ENCODE measurements at regions of chr5 and their contacts with region 1.

Region 1: GRCh38 chr5:92687821-92688722 is 892.9 kb downstream of the NR2F1-AS1 start:
- DNase-seq: peak; percentile 78
- ATAC-seq: peak; percentile 96
- H3K4me3 ChIP-seq: peak overlapping the region; percentile 1; the same call in 1 of the 2 replicates
- H3K27ac ChIP-seq: no peak overlapping the region; the same call in 1 of the 2 replicates
- H3K4me1 ChIP-seq: no peaks in the 10 kb centered on the region
- H3K27me3 ChIP-seq: no peaks in the 10 kb centered on the region
- CTCF ChIP-seq: peak; percentile 62
- POLR2A ChIP-seq: no peak
- RAD21 ChIP-seq: peak; percentile 72

Region 2: GRCh38 chr5:92838253-92838652 is 150.2 kb after region 1 on chr5:
- CTCF ChIA-PET with region 1: interaction called, 4 read pairs
- POLR2A ChIA-PET with region 1: no interaction called
- dilution Hi-C with region 1: no loop called
- in situ Hi-C with region 1: no loop called
- intact Hi-C with region 1: loop called (anchors 5 kb)
- DNase-seq: no peak
- ATAC-seq: no peak
- H3K4me3 ChIP-seq: no peak overlapping the region
- H3K27ac ChIP-seq: peak overlapping the region; percentile 75; the same call in 1 of the 2 replicates
- H3K4me1 ChIP-seq: peaks cover 9% of the 10 kb centered on the region
- H3K27me3 ChIP-seq: no peaks in the 10 kb centered on the region
- CTCF ChIP-seq: 0 out of 2 replicates have a peak, but pooled peaks have one; percentile 4
- POLR2A ChIP-seq: no peak
- RAD21 ChIP-seq: no peak

Region 3: DNA sequence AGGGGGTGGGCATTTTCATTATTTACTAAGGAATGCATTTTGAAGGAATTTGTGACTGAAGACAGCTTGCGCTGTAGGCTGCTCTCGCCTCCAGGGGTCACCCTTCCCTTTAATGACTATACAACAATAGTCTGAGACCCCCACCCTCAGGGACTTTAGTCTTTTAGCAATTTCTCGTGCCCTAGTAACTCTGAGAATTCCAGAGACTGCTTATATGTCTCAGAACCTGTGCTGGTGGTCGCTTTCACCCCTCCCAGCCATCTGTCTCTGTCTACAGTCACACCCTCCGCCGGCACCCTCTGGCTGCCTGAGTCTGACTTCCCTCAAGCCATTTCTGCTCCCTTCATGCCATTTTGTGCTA is 221.5 kb after region 1 on chr5:
- CTCF ChIA-PET with region 1: interaction called, 6 read pairs
- POLR2A ChIA-PET with region 1: no interaction called
- dilution Hi-C with region 1: no loop called
- in situ Hi-C with region 1: no loop called
- intact Hi-C with region 1: loop called (anchors 1 kb)
- DNase-seq: peak; percentile 11
- ATAC-seq: no peak
- H3K4me3 ChIP-seq: no peak overlapping the region
- H3K27ac ChIP-seq: no peak overlapping the region
- H3K4me1 ChIP-seq: peaks cover 3% of the 10 kb centered on the region
- H3K27me3 ChIP-seq: no peaks in the 10 kb centered on the region
- CTCF ChIP-seq: peak; percentile 43
- POLR2A ChIP-seq: no peak
- RAD21 ChIP-seq: peak; percentile 49

Region 4: DNA sequence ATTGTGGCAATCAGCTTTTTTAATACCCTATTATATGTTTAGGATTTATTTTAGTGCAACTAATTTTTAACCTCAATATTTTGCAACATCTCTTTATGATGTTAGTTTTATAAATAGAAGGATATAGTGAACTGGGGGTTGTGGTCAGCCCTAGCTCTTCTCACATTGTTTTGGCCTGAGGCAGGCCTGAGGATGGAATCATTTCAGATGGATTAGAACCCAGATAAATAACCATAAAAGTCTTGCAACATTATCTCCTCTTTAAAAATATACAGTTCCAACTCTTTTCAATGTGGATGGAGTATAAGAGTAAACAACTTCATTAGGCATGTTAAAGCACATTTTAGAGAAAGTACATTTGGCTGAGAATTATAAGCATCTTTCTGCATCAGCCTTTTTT is 370.2 kb after region 1 on chr5:
- CTCF ChIA-PET with region 1: no interaction called
- POLR2A ChIA-PET with region 1: no interaction called
- dilution Hi-C with region 1: no loop called
- in situ Hi-C with region 1: no loop called
- intact Hi-C with region 1: loop called (anchors 10 kb)
- DNase-seq: peak; percentile 92
- ATAC-seq: peak; percentile 89
- H3K4me3 ChIP-seq: no peak overlapping the region
- H3K27ac ChIP-seq: no peak overlapping the region
- H3K4me1 ChIP-seq: peaks cover 7% of the 10 kb centered on the region
- H3K27me3 ChIP-seq: no peaks in the 10 kb centered on the region
- CTCF ChIP-seq: no peak
- POLR2A ChIP-seq: no peak
- RAD21 ChIP-seq: no peak

Region 5: DNA sequence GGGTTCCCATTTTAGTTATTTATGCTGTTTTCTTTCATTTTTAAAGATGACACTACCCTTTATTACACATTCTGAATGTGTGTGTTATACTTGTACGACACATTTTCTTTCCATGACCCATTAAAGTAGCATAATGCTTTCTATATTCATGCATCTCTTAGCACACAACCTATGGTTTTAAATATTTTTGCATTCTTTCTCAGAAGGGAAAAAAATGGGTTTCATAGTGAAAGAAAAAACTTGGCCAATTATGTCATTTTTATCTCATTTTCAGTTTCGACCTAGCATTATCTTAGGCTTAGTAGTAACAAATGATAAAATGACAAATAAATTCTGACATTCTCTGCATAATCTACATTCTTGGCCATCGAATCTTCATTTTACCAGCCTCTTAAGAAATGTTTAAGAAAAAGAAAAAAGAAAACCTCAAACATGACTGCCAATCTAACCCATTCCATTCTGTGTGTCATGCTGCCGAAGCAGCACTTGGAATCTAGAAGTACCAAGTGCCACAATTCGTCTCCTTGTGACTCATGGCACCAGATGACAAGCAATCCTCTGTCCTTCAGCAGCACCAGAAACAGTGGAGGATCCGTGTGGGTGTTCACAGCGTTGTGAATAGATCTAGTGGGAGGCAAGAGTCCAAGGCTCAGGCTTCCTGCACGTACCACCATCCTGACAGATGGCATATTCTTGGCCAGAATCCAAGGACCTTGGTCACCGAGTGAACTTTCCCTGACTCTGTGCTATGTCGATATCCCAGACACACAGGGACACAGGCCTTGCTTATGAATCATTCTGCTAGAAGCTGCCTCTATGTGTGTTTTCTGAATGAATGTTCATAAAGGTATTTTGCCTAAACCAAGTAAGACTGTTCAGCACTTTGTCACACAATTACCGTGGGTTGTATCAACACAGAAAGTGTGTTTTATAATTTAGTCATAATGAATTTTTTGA is 390.3 kb after region 1 on chr5:
- CTCF ChIA-PET with region 1: no interaction called
- POLR2A ChIA-PET with region 1: no interaction called
- dilution Hi-C with region 1: no loop called
- in situ Hi-C with region 1: no loop called
- intact Hi-C with region 1: loop called (anchors 5 kb)
- DNase-seq: peak; percentile 93
- ATAC-seq: peak; percentile 82
- H3K4me3 ChIP-seq: peak overlapping the region; percentile 29
- H3K27ac ChIP-seq: peak overlapping the region; percentile 97
- H3K4me1 ChIP-seq: peaks cover 4% of the 10 kb centered on the region
- H3K27me3 ChIP-seq: no peaks in the 10 kb centered on the region
- CTCF ChIP-seq: no peak
- POLR2A ChIP-seq: no peak
- RAD21 ChIP-seq: no peak; the same call in 1 of the 2 replicates

Region 6: GRCh38 chr5:93092349-93093105 is 404.5 kb after region 1 on chr5:
- CTCF ChIA-PET with region 1: no interaction called
- POLR2A ChIA-PET with region 1: no interaction called
- dilution Hi-C with region 1: no loop called
- in situ Hi-C with region 1: no loop called
- intact Hi-C with region 1: no loop called
- DNase-seq: peak; percentile 47
- ATAC-seq: peak; percentile 57
- H3K4me3 ChIP-seq: no peak overlapping the region
- H3K27ac ChIP-seq: no peak overlapping the region
- H3K4me1 ChIP-seq: peaks cover 2% of the 10 kb centered on the region; the same call in 1 of the 2 replicates
- H3K27me3 ChIP-seq: no peaks in the 10 kb centered on the region
- CTCF ChIP-seq: peak; percentile 52
- POLR2A ChIP-seq: no peak
- RAD21 ChIP-seq: peak; percentile 60

Region 7: GRCh38 chr5:93246090-93246855 is 558.2 kb after region 1 on chr5:
- CTCF ChIA-PET with region 1: interaction called, 3 read pairs
- POLR2A ChIA-PET with region 1: no interaction called
- dilution Hi-C with region 1: no loop called
- in situ Hi-C with region 1: no loop called
- intact Hi-C with region 1: loop called (anchors 10 kb)
- DNase-seq: peak; percentile 47
- ATAC-seq: peak; percentile 59
- H3K4me3 ChIP-seq: no peak overlapping the region
- H3K27ac ChIP-seq: peak overlapping the region; percentile 41; the same call in 1 of the 2 replicates
- H3K4me1 ChIP-seq: peaks cover 6% of the 10 kb centered on the region
- H3K27me3 ChIP-seq: no peaks in the 10 kb centered on the region
- CTCF ChIP-seq: no peak
- POLR2A ChIP-seq: no peak
- RAD21 ChIP-seq: no peak

Region 8: DNA sequence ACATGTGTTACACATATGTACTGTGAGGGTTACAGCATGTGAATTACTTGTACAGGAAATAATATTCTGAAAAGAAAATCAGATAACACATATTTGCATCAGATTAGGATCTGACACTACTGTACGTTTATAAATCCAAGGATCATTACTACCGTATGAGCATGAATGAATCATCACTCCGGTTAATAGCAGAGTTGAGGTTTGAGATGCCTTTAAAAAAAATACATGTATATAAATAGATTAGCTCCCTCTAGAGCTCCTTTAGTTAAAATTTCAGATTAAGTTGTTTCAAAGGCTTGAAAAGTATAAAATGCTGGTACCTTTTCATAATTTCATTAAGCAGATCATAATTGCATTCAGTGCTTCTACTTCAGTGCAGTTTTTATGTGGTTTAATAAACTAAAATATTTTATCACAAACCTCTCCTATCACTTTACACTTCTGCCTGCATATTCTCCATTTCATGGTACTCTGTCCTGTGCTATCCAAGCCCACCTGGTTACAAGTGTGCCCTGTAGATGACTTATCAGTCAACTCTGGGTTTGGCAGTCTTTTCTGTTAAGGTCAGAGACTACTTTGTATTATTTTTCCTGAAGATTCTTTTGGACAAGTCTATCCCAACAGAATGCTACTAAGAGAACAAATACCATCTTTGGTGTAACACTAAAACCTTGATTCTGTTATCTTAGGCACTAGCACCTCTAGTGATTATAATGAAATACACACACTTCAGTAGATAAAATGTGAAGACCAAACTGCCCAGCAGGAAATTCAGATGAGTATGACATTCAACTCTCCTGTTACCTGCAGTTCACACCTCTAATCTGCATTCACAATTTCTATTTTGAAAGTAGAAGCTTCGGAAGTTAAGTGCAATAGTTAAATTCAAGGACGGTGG is 1101.3 kb after region 1 on chr5:
- CTCF ChIA-PET with region 1: no interaction called
- POLR2A ChIA-PET with region 1: no interaction called
- dilution Hi-C with region 1: no loop called
- in situ Hi-C with region 1: loop called (anchors 25 kb)
- intact Hi-C with region 1: no loop called
- DNase-seq: peak; percentile 88
- ATAC-seq: peak; percentile 76
- H3K4me3 ChIP-seq: no peak overlapping the region
- H3K27ac ChIP-seq: no peak overlapping the region
- H3K4me1 ChIP-seq: peaks cover 4% of the 10 kb centered on the region; the same call in 1 of the 2 replicates
- H3K27me3 ChIP-seq: no peaks in the 10 kb centered on the region
- CTCF ChIP-seq: peak; percentile 30; the same call in 1 of the 2 replicates
- POLR2A ChIP-seq: no peak
- RAD21 ChIP-seq: no peak; the same call in 1 of the 2 replicates